Transverse colon (tissue), 4 donors: ENCODE measurements at regions of chr2 and their contacts with region 1.

Region 1: GRCh38 chr2:14011190-14011589 is 621.3 kb upstream of the LRATD1 start:
- DNase-seq: no peak
- H3K4me3 ChIP-seq: no peak overlapping the region
- H3K27ac ChIP-seq: no peak overlapping the region
- H3K4me1 ChIP-seq: no peaks in the 10 kb centered on the region
- H3K27me3 ChIP-seq: no peaks in the 10 kb centered on the region
- CTCF ChIP-seq: no peak
- EP300 ChIP-seq: no peak
- POLR2A ChIP-seq: no peak

Region 2: GRCh38 chr2:13986119-13986720 is 25.0 kb before region 1 on chr2:
- in situ Hi-C with region 1: no loop called
- intact Hi-C with region 1: loop called (anchors 1 kb)
- DNase-seq: no peak
- H3K4me3 ChIP-seq: no peak overlapping the region
- H3K27ac ChIP-seq: no peak overlapping the region
- H3K4me1 ChIP-seq: no peaks in the 10 kb centered on the region
- H3K27me3 ChIP-seq: no peaks in the 10 kb centered on the region
- CTCF ChIP-seq: no peak
- EP300 ChIP-seq: no peak
- POLR2A ChIP-seq: no peak

Region 3: GRCh38 chr2:14220101-14220500 is 208.9 kb after region 1 on chr2:
- in situ Hi-C with region 1: no loop called
- intact Hi-C with region 1: no loop called
- DNase-seq: no peak
- H3K4me3 ChIP-seq: no peak overlapping the region
- H3K27ac ChIP-seq: no peak overlapping the region
- H3K4me1 ChIP-seq: no peaks in the 10 kb centered on the region
- H3K27me3 ChIP-seq: no peaks in the 10 kb centered on the region
- CTCF ChIP-seq: no peak
- EP300 ChIP-seq: no peak
- POLR2A ChIP-seq: no peak